ENCODE measurements at regions of chr1 and their contacts with region 1.

Region 1: DNA sequence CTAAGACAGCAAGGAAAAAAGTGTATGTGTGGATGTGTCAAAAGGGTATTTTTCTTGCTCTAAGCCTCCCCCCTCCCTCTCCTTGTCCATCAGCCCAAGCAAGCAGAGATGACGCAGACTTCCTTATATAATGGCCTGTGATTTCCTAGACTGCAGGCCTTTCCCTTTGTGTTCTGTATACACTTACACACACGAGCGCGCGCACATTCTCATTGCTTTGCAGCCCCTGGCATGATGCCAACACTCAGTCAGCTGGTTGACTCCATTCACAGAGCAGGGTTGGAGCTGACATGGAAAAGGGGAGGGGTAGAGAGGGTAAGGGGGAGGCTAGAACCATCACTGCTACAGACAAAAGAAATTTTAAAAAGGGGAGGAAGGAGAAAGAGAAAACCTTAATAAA is 41.8 kb downstream of the GATAD2B start:
- DNase-seq: no peak
- ATAC-seq: peak; percentile 62
- H3K4me3 ChIP-seq: no peak overlapping the region; a peak in 1 of 4 replicates
- H3K27ac ChIP-seq: no peak overlapping the region
- H3K4me1 ChIP-seq: peaks cover 23% of the 10 kb centered on the region
- H3K27me3 ChIP-seq: no peaks in the 10 kb centered on the region
- CTCF ChIP-seq: no peak

Region 2: GRCh38 chr1:153899509-153899908 is 18.5 kb after region 1 on chr1:
- CTCF ChIA-PET with region 1: no interaction called
- POLR2A ChIA-PET with region 1: interaction called, 19 read pairs
- in situ Hi-C with region 1: no loop called
- intact Hi-C with region 1: no loop called
- DNase-seq: no peak
- ATAC-seq: no peak
- H3K4me3 ChIP-seq: no peak overlapping the region
- H3K27ac ChIP-seq: no peak overlapping the region
- H3K4me1 ChIP-seq: no peaks in the 10 kb centered on the region
- H3K27me3 ChIP-seq: no peaks in the 10 kb centered on the region
- CTCF ChIP-seq: no peak